ENCODE measurements at regions of chr2 and their contacts with region 1.

Region 1: GRCh38 chr2:27683390-27684071 is 19.8 kb downstream of the SLC4A1AP start:
- DNase-seq: peak; percentile 76
- CTCF ChIP-seq: peak; percentile 99

Region 2: GRCh38 chr2:27628767-27629709 is 54.5 kb before region 1 on chr2 and contains the starts of genes CCDC121 and GPN1:
- CTCF ChIA-PET with region 1: interaction called, 18 read pairs
- POLR2A ChIA-PET with region 1: no interaction called
- DNase-seq: peak; percentile 92
- CTCF ChIP-seq: no peak

Region 3: DNA sequence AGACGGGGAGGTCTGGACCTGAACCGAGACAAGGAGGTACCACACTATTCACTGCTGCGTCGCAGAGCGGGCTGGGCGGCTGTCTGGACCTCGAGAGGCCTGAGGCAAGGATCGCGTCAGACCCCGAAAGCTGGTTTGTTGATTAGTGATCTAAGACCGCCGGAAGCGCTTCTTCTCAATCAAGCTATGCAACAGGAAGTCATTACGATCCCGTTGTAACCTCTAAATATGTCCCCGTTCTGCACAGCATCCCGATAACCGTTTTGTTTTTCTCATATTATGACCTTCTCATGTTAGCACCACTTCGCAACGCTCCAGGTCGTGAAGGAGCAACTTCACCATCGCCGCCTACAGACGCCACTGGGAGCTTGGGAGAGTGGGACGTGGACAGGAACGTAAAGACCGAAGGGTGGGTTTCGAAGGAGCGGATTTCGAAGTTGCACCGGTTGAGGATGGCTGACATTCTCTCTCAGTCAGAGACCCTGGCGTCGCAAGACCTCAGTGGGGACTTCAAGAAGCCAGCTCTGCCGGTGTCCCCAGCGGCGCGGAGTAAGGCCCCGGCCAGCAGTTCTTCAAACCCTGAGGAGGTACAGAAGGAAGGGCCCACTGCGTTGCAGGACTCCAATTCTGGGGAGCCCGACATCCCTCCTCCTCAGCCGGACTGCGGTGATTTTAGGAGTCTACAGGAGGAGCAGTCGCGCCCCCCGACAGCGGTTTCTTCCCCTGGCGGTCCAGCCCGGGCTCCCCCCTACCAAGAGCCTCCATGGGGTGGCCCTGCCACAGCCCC is 19.9 kb before region 1 on chr2 and contains the starts of genes SLC4A1AP and SUPT7L:
- CTCF ChIA-PET with region 1: interaction called, 111 read pairs
- POLR2A ChIA-PET with region 1: no interaction called
- DNase-seq: peak; percentile 85
- CTCF ChIP-seq: no peak

Region 4: GRCh38 chr2:27697660-27698059 is 14.1 kb after region 1 on chr2:
- CTCF ChIA-PET with region 1: interaction called, 60 read pairs
- POLR2A ChIA-PET with region 1: no interaction called
- DNase-seq: no peak
- CTCF ChIP-seq: no peak